ENCODE measurements at regions of chr4 and their contacts with region 1.

Region 1: GRCh38 chr4:60865273-60865672 is 334.9 kb upstream of the ADGRL3 start:
- DNase-seq: peak in 1 of 2 experiments; percentile 11
- H3K4me3 ChIP-seq: no peak overlapping the region
- H3K4me3 Mint-ChIP-seq: no peak overlapping the region
- H3K27ac Mint-ChIP-seq: peak overlapping the region; percentile 7
- H3K4me1 ChIP-seq: no peaks in the 10 kb centered on the region
- H3K4me1 Mint-ChIP-seq: peaks cover 14% of the 10 kb centered on the region
- H3K27me3 ChIP-seq: no peaks in the 10 kb centered on the region
- H3K27me3 Mint-ChIP-seq: no peaks in the 10 kb centered on the region
- CTCF ChIP-seq: peak in 1 of 2 experiments; percentile 24

Region 2: GRCh38 chr4:60544981-60545380 is 320.3 kb before region 1 on chr4:
- CTCF ChIA-PET with region 1: no interaction called
- POLR2A ChIA-PET with region 1: no interaction called
- intact Hi-C with region 1: no loop called
- DNase-seq: no peak
- H3K4me3 ChIP-seq: no peak overlapping the region
- H3K4me3 Mint-ChIP-seq: no peak overlapping the region
- H3K27ac Mint-ChIP-seq: no peak overlapping the region
- H3K4me1 ChIP-seq: no peaks in the 10 kb centered on the region
- H3K4me1 Mint-ChIP-seq: no peaks in the 10 kb centered on the region
- H3K27me3 ChIP-seq: no peaks in the 10 kb centered on the region
- H3K27me3 Mint-ChIP-seq: no peaks in the 10 kb centered on the region
- CTCF ChIP-seq: no peak

Region 3: GRCh38 chr4:60962286-60962685 is 97.0 kb after region 1 on chr4:
- CTCF ChIA-PET with region 1: no interaction called
- POLR2A ChIA-PET with region 1: no interaction called
- intact Hi-C with region 1: loop called (anchors 1 kb)
- DNase-seq: peak; percentile 43 to 46
- H3K4me3 ChIP-seq: no peak overlapping the region
- H3K4me3 Mint-ChIP-seq: no peak overlapping the region
- H3K27ac Mint-ChIP-seq: no peak overlapping the region
- H3K4me1 ChIP-seq: peaks cover 14% of the 10 kb centered on the region; the same call in 1 of the 2 replicates
- H3K4me1 Mint-ChIP-seq: peaks cover 8% of the 10 kb centered on the region
- H3K27me3 ChIP-seq: no peaks in the 10 kb centered on the region
- H3K27me3 Mint-ChIP-seq: no peaks in the 10 kb centered on the region
- CTCF ChIP-seq: peak; percentile 12 to 38

Region 4: GRCh38 chr4:61293707-61294400 is 428.6 kb after region 1 on chr4:
- CTCF ChIA-PET with region 1: no interaction called
- POLR2A ChIA-PET with region 1: no interaction called
- intact Hi-C with region 1: loop called (anchors 10 kb)
- DNase-seq: no peak
- H3K4me3 ChIP-seq: no peak overlapping the region
- H3K4me3 Mint-ChIP-seq: no peak overlapping the region
- H3K27ac Mint-ChIP-seq: no peak overlapping the region
- H3K4me1 ChIP-seq: no peaks in the 10 kb centered on the region
- H3K4me1 Mint-ChIP-seq: no peaks in the 10 kb centered on the region
- H3K27me3 ChIP-seq: no peaks in the 10 kb centered on the region
- H3K27me3 Mint-ChIP-seq: no peaks in the 10 kb centered on the region
- CTCF ChIP-seq: no peak